Psoas muscle (tissue), 8 donors: ENCODE measurements at regions of chr13 and their contacts with region 1.

Region 1: GRCh38 chr13:110455941-110456340 is 105.6 kb downstream of the RAB20 start:
- DNase-seq: peak; percentile 72 to 77
- ATAC-seq: peak; percentile 89 to 95 (median 92)
- H3K4me3 ChIP-seq: peak overlapping the region; percentile 12
- H3K27ac ChIP-seq: no peak overlapping the region
- H3K4me1 ChIP-seq: no peaks in the 10 kb centered on the region
- H3K27me3 ChIP-seq: no peaks in the 10 kb centered on the region
- CTCF ChIP-seq: peak; percentile 74

Region 2: GRCh38 chr13:110475550-110476219 is 19.7 kb after region 1 on chr13:
- intact Hi-C with region 1: no loop called
- DNase-seq: no peak
- ATAC-seq: no peak
- H3K4me3 ChIP-seq: no peak overlapping the region
- H3K27ac ChIP-seq: no peak overlapping the region
- H3K4me1 ChIP-seq: no peaks in the 10 kb centered on the region
- H3K27me3 ChIP-seq: no peaks in the 10 kb centered on the region
- CTCF ChIP-seq: no peak

Region 3: GRCh38 chr13:110561344-110562035 is 105.5 kb after region 1 on chr13 and contains the start of gene RAB20:
- intact Hi-C with region 1: loop called in 1 of 2 experiments (anchors 5 kb)
- DNase-seq: peak; percentile 88 to 90
- ATAC-seq: peak; percentile 78 to 88 (median 83)
- H3K4me3 ChIP-seq: peak within 1 kb of the TSS; percentile 88
- H3K27ac ChIP-seq: peak within 1 kb of the TSS; percentile 74
- H3K4me1 ChIP-seq: peaks cover 11% of the 10 kb centered on the region
- H3K27me3 ChIP-seq: peaks cover 0 to 3% (median 0%) of the 10 kb centered on the region in 3 donors
- CTCF ChIP-seq: no peak
- total RNA-seq, gene RAB20: 2.3 to 6.8 (median 3.0) TPM